ENCODE measurements at regions of chr2 and their contacts with region 1.

Region 1: GRCh38 chr2:231104115-231104713 is 20.6 kb downstream of the HTR2B start:
- DNase-seq: peak in 6 of 10 donors; percentile 34 to 86 (median 54)
- H3K4me3 ChIP-seq: no peak overlapping the region
- H3K27ac ChIP-seq: peak overlapping the region in 19 of 59 donors; percentile 2 to 66 (median 44)
- H3K27me3 ChIP-seq: no peaks in the 10 kb centered on the region
- CTCF ChIP-seq: peak; percentile 57 to 96 (median 82)

Region 2: DNA sequence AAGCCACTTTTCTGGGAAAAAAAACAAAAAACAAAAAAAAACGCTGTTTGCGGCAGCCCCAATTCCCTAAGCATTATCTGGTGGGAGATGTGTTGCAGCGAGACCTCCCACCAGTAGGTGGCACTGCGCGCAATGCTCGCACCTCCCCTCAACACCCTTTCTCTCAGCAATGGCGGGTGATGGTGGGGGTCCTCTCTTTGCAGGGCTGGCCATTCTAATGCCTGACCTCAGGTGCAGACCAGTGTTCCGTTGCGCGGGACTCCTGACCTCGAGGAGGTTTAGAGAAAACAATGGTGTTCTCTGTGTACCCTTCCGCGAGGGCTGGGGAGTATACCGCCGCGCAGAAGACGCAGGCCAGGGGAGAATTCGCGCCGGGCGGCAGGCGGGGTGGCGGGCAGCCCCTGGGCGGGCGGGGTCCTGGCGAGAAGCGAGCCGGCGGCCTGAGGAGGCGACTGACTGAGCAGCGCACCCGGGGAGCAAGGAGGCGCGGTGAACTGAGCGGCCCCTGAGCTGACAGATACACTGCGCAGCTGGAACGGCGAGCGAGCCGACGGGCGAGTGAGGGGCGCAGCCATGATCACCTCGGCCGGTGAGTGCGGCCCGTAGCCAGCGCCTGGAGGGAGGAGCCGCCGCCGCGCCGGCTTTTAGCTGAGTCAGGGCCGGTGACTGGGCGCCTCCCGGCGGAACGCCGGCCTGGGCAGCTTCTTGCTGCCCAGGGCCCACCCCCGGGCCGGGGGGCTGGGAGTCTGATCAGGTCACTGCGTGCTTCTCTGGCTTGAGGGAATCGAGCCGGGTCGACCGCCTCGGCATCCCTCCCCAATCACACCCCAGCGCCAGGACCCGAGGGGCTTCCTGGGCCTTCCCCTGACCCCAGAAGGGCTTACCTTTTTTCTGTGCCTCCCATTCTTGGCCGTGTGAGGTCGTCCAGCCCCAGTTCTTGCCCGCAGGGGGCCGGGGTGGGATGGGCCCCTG is 47.5 kb before region 1 on chr2 and contains the start of gene PSMD1:
- intact Hi-C with region 1: no loop called
- DNase-seq: peak; percentile 82 to 94 (median 90)
- H3K4me3 ChIP-seq: peak within 1 kb of the TSS; percentile 63 to 100 (median 96)
- H3K27ac ChIP-seq: peak within 1 kb of the TSS; percentile 87 to 100 (median 98)
- H3K27me3 ChIP-seq: no peaks in the 10 kb centered on the region
- CTCF ChIP-seq: peak; percentile 86 to 99 (median 95)
- total RNA-seq, gene PSMD1: 86.5 to 175 (median 121) TPM

Region 3: GRCh38 chr2:231198291-231199173 is 94.3 kb after region 1 on chr2 and contains the start of gene ARMC9:
- intact Hi-C with region 1: loop called in 1 of 2 experiments (anchors 10 kb)
- DNase-seq: peak; percentile 50 to 92 (median 76)
- H3K4me3 ChIP-seq: peak within 1 kb of the TSS; percentile 55 to 99 (median 87)
- H3K27ac ChIP-seq: peak within 1 kb of the TSS in 32 of 59 donors; percentile 3 to 82 (median 47)
- H3K27me3 ChIP-seq: no peaks in the 10 kb centered on the region
- CTCF ChIP-seq: peak in 21 of 56 donors; percentile 5 to 46 (median 22)
- total RNA-seq, gene ARMC9: 18.3 to 77.0 (median 52.4) TPM

Region 4: GRCh38 chr2:231212329-231212845 is 108.2 kb after region 1 on chr2:
- intact Hi-C with region 1: no loop called
- DNase-seq: no peak
- H3K4me3 ChIP-seq: no peak overlapping the region
- H3K27ac ChIP-seq: peak overlapping the region in 32 of 59 donors; percentile 7 to 68 (median 38)
- H3K27me3 ChIP-seq: no peaks in the 10 kb centered on the region
- CTCF ChIP-seq: no peak

Region 5: DNA sequence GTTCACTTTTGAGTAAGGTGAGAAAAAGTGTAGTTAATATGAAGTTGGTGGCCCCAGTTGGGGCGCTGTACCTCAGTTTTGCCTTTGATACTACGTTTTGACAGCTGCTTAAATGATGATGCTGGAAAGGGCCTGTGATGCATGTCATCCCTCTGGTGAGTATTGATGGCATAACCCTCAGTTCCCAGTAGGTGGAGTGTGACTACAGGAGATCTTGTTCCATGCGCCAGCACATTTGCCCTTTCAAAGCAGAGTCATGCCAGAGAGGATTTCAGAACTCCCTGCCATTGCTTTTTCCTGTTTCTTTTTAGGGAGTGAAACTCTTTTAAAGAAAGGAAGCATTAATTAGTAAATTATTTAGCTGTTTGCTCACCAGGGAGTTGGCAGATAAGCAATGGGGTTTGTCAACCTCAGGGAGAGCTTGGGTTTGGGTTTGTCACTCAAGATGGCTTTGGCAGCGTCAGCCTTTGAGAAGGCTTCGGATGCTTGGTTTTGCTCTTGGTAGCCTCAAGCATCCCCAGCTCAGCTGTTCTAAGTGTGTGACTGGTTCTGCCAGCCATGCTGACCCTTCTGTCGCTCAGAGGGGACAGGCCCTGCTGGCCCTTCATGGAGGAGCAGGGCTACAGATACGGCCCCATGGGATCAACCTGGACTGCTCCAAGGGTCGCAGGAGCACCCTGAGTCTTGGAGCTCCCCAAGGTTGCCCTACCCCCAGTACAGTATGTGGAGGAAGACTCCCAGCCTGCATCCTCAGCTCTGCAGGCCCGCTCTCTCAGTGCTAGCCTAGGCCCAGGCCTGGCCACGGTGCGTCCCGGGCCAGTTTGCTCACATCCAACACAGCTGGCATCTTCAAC is 123.3 kb after region 1 on chr2:
- intact Hi-C with region 1: loop called in 1 of 2 experiments (anchors 10 kb)
- DNase-seq: peak in 9 of 10 donors; percentile 55 to 83 (median 61)
- H3K4me3 ChIP-seq: no peak overlapping the region
- H3K27ac ChIP-seq: peak overlapping the region in 46 of 59 donors; percentile 0 to 81 (median 60)
- H3K27me3 ChIP-seq: no peaks in the 10 kb centered on the region
- CTCF ChIP-seq: peak; percentile 61 to 98 (median 88)

Region 6: GRCh38 chr2:231370749-231371429 is 266.7 kb after region 1 on chr2:
- intact Hi-C with region 1: no loop called
- DNase-seq: peak in 1 of 10 donors; percentile 19
- H3K4me3 ChIP-seq: no peak overlapping the region
- H3K27ac ChIP-seq: peak overlapping the region in 52 of 59 donors; percentile 34 to 93 (median 77)
- H3K27me3 ChIP-seq: no peaks in the 10 kb centered on the region
- CTCF ChIP-seq: no peak

Region 7: GRCh38 chr2:231411831-231412617 is 307.8 kb after region 1 on chr2:
- intact Hi-C with region 1: loop called (anchors 5 to 10 kb)
- DNase-seq: peak; percentile 78 to 93 (median 86)
- H3K4me3 ChIP-seq: peak overlapping the region; percentile 50 to 89 (median 71)
- H3K27ac ChIP-seq: peak overlapping the region in 37 of 59 donors; percentile 2 to 84 (median 51)
- H3K27me3 ChIP-seq: no peaks in the 10 kb centered on the region
- CTCF ChIP-seq: peak; percentile 33 to 96 (median 88)

Region 8: DNA sequence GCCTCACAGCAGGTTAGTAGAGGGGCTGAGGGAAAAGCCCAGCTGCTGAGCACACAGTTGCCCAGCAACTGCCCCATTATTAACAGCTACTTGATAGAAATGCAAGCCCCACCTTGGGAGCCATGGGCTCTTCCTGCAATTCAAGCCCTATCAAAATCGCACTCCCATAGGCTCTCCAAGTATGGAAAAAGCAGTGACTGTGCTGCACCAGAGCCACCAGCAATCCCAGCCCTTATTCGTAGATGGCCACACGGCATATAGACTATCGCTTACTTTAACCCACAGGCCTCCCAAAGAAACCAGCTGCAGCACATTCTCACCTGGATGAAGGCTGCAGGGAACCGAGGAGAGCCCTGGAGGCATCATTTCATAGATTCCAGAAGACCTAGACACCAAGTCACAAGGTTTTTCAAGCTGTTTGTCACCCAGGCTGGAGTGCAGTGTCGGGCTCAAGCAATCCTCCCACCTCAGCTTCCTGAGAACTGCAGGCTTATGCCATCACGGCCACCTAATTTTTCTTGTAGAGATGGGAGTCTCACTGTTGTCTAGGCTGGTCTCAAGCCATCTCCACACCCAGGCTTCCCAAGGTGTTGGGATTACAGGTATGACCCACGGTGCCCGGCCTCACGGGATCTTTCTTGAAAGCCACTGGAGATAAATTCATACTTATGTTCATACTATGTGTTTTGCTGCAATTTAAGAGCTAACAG is 348.7 kb after region 1 on chr2:
- intact Hi-C with region 1: loop called (anchors 2 to 5 kb)
- DNase-seq: peak in 1 of 10 donors; percentile 8
- H3K4me3 ChIP-seq: no peak overlapping the region
- H3K27ac ChIP-seq: peak overlapping the region in 30 of 59 donors; percentile 4 to 74 (median 41)
- H3K27me3 ChIP-seq: no peaks in the 10 kb centered on the region
- CTCF ChIP-seq: no peak

Measured in dorsolateral prefrontal cortex (tissue), 120 donors.